ENCODE measurements at regions of chr3 and their contacts with region 1.

Region 1: DNA sequence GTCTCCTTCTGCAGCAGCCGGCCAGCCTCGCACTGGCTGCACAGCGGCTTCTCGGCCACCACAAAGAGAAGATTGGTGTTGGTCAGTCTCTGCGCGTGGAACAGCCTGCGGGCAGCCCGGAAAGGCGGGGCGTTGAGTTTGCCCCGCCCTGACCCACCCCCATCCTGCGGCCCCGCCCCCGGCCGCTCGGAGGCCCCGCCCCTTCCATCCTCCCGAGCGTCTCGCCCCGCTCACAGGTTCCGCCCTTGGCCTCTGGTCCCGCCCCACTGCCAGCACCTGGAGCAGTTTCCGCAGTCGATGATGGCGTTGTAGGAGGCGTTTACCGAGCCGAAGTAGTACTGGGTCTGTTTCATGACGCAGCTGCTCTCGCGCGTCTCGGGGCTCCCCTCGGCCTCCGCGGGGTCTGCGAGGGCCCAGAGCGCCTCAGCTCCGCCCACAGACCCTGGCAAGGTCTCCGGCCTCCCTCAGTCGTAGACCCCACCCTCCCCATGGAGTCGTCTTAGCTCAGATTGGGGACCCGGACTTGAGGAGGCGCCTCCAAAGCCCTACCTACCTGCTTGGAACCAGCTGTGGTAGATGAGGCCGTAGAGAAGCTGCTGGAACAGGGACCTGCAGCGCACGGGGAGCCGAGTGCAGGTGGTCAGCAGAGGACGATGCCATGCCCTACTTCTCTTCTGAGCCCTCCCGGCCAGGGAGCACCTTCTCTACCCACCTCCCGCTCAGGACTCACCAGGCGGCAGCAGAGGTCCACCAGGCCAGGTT is 5.9 kb upstream of the TMEM115 start:
- DNase-seq: peak; percentile 92
- H3K4me3 Mint-ChIP-seq: peak overlapping the region; percentile 77
- H3K27ac Mint-ChIP-seq: peak overlapping the region; percentile 58
- H3K4me1 Mint-ChIP-seq: peaks cover 1% of the 10 kb centered on the region
- H3K27me3 Mint-ChIP-seq: no peaks in the 10 kb centered on the region

Region 2: GRCh38 chr3:50350527-50351322 is 14.5 kb before region 1 on chr3 and contains the starts of genes CYB561D2 and NPRL2:
- intact Hi-C with region 1: loop called (anchors 2 kb)
- DNase-seq: peak; percentile 99
- H3K4me3 Mint-ChIP-seq: peak within 1 kb of the TSS; percentile 91
- H3K27ac Mint-ChIP-seq: peak within 1 kb of the TSS; percentile 96
- H3K4me1 Mint-ChIP-seq: peaks cover 36% of the 10 kb centered on the region
- H3K27me3 Mint-ChIP-seq: no peaks in the 10 kb centered on the region
- total RNA-seq, gene CYB561D2: 22.9 and 24.6 TPM in 2 replicates
- total RNA-seq, gene NPRL2: 34.5 and 42.7 TPM in 2 replicates

Measured in activated T-helper 2 cell treated with anti-CD3 and anti-CD28 coated beads, Interferon-gamma antibody, Interleukin-2, Interleukin-4, amounts not matched to agents 10 μg/mL and 5 μg/mL and 100 μg/mL, durations not matched to agents 14 hours and 24 hours and 36 hours (primary cell).